ENCODE measurements at regions of chr16 and their contacts with region 1.

Region 1: GRCh38 chr16:27235055-27235937 is 32.0 kb downstream of the KDM8 start:
- DNase-seq: peak; percentile 87
- H3K4me3 ChIP-seq: no peak overlapping the region
- H3K27ac ChIP-seq: peak overlapping the region; percentile 32
- H3K4me1 ChIP-seq: peaks cover 21% of the 10 kb centered on the region
- H3K27me3 ChIP-seq: no peaks in the 10 kb centered on the region
- CTCF ChIP-seq: peak; percentile 96

Region 2: GRCh38 chr16:27113341-27113841 is 121.9 kb before region 1 on chr16:
- CTCF ChIA-PET with region 1: no interaction called
- POLR2A ChIA-PET with region 1: no interaction called
- intact Hi-C with region 1: no loop called
- DNase-seq: no peak
- H3K4me3 ChIP-seq: no peak overlapping the region
- H3K27ac ChIP-seq: no peak overlapping the region
- H3K4me1 ChIP-seq: peaks cover 5% of the 10 kb centered on the region
- H3K27me3 ChIP-seq: no peaks in the 10 kb centered on the region
- CTCF ChIP-seq: no peak

Region 3: DNA sequence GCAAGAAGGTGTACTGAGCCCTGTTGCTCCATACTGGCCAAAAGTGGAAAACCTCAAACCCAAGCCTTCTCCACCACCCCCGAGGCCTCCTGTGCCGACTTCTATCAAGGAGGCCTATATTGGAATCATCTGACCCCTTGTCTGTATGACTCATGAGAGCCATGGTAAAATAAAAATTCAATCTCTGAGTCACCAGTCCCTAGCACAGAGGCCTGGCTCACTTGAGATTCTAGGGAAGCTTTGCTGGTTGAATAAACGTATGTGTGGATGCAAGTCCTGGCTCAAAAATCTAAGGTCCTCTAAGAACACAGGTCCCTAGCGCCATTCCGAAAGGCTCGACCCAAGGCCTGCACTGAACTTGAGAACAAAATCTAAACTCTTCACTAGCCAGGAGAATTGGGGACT is 18.2 kb after region 1 on chr16:
- CTCF ChIA-PET with region 1: no interaction called
- POLR2A ChIA-PET with region 1: no interaction called
- intact Hi-C with region 1: no loop called
- DNase-seq: peak; percentile 49
- H3K4me3 ChIP-seq: no peak overlapping the region
- H3K27ac ChIP-seq: no peak overlapping the region
- H3K4me1 ChIP-seq: peaks cover 9% of the 10 kb centered on the region
- H3K27me3 ChIP-seq: no peaks in the 10 kb centered on the region
- CTCF ChIP-seq: no peak

Region 4: GRCh38 chr16:27367461-27368357 is 132.4 kb after region 1 on chr16:
- CTCF ChIA-PET with region 1: interaction called, 39 read pairs
- POLR2A ChIA-PET with region 1: no interaction called
- intact Hi-C with region 1: loop called (anchors 1 kb)
- DNase-seq: peak; percentile 88
- H3K4me3 ChIP-seq: peak overlapping the region; percentile 0
- H3K27ac ChIP-seq: peak overlapping the region; percentile 54
- H3K4me1 ChIP-seq: peaks cover 15% of the 10 kb centered on the region
- H3K27me3 ChIP-seq: no peaks in the 10 kb centered on the region
- CTCF ChIP-seq: peak; percentile 75